ENCODE measurements at regions of chr11 and their contacts with region 1.

Region 1: DNA sequence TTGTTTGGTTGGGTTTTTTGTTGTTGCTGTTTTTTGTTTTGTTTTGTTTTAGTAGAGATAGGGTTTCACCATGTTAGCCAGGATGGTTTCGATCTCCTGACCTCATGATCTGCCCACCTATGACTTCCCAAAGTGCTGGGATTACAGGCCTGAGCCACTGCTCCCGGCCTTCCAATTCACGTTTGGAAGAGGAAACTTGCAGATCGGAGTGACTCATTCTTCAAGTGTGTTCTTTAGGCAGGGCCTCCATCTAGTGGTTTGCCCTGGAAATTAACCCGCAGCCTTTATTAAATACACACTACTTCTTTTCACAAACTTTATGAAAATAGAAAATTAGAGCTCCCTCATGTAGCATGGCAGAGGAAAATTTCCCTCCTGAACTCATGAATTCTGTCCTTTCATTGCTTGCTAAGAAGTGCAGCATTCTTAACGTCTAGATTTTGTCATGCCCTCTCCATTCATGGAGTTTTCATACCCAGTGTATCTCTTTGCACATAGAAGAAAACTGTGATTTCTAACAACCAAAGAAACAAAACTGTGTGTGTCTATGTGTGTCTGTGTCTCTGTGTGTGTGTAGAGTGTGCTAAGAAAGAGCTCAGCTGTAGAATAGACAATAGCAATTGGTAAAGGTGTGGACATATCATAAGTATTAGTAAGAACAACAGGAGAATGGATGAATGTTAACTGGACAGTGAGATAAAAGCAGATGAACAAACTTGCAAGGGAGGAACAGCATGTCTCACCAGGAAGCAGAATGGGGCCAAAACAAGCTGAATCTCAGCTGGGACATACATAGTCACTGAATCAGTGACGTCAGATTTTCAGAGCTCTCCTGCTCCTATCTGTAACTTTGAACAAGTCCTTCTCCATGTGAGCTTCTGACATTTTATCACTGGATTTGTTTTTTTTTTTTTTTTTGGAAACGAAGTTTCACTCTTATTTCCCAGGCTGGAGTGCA is 118.4 kb downstream of the BBOX1 start:
- DNase-seq: peak; percentile 77
- H3K4me3 ChIP-seq: no peak overlapping the region
- H3K27ac ChIP-seq: peak overlapping the region in 1 of 4 donors; percentile 34
- H3K4me1 ChIP-seq: peaks cover 0 to 12% (median 0%) of the 10 kb centered on the region in 4 donors
- H3K27me3 ChIP-seq: no peaks in the 10 kb centered on the region
- CTCF ChIP-seq: peak; percentile 73 to 86 (median 78)
- EP300 ChIP-seq: no peak
- POLR2A ChIP-seq: no peak

Region 2: DNA sequence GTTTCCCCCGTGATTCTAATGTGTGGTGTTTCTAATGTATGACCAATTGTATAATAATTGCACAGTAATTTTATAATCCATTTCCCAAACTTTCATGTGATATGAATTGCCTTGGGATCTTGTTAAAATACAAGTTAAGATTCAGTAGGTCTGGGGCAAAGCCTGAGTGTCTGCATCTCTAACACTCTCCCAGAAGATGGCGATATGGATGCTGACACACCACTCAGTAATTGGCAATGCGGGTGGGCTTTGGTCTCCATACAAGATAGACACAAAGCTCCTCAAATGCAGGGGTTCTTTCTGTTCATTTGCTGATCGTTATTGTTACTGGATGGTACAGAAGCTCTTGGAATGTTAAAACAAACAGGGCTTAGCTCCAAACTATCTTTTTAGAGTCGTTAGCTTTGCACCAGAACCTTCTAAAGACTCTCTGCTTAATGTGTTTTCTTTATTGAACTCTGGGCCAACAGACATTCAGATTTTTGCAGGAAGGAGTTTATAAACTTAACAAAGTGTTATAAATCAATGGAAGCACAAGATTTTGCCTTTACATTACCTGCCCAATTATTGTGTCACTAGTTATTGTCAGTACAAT is 872.4 kb before region 1 on chr11:
- intact Hi-C with region 1: loop called (anchors 10 kb)
- DNase-seq: no peak
- H3K4me3 ChIP-seq: no peak overlapping the region
- H3K27ac ChIP-seq: no peak overlapping the region
- H3K4me1 ChIP-seq: peaks cover 0 to 4% (median 0%) of the 10 kb centered on the region in 4 donors
- H3K27me3 ChIP-seq: no peaks in the 10 kb centered on the region
- CTCF ChIP-seq: no peak
- EP300 ChIP-seq: no peak
- POLR2A ChIP-seq: no peak

Region 3: DNA sequence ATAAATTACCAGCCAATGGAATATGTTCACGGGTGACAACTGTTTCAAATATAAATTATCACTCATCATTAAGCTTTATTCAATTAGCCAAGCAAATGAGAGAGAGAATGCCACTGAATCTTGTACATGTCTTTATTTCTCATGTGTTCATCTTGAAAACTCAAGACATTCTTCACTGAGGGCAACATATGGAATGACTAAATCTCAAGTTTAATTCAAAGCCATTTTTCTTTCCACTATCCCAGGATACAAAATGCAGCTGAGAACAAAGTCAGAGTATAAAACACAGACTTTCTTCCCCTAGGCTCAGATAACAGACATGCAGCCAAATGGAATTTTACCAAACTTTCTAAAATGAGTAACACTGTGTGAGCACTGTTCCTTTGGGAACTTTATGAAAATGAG is 130.4 kb before region 1 on chr11:
- intact Hi-C with region 1: no loop called
- DNase-seq: no peak
- H3K4me3 ChIP-seq: no peak overlapping the region
- H3K27ac ChIP-seq: peak overlapping the region in 1 of 4 donors; percentile 26
- H3K4me1 ChIP-seq: no peaks in the 10 kb centered on the region
- H3K27me3 ChIP-seq: no peaks in the 10 kb centered on the region
- CTCF ChIP-seq: no peak
- EP300 ChIP-seq: no peak
- POLR2A ChIP-seq: no peak

Region 4: GRCh38 chr11:27514558-27514957 is 355.6 kb after region 1 on chr11:
- intact Hi-C with region 1: no loop called
- DNase-seq: no peak
- H3K4me3 ChIP-seq: no peak overlapping the region
- H3K27ac ChIP-seq: no peak overlapping the region
- H3K4me1 ChIP-seq: no peaks in the 10 kb centered on the region
- H3K27me3 ChIP-seq: no peaks in the 10 kb centered on the region
- CTCF ChIP-seq: no peak
- EP300 ChIP-seq: no peak
- POLR2A ChIP-seq: no peak